ENCODE measurements at regions of chrX and their contacts with region 1.

Region 1: GRCh38 chrX:154056770-154057241 is 37.1 kb upstream of the IRAK1 start:
- DNase-seq: no peak
- ATAC-seq: peak; percentile 31 to 61 (median 54)
- H3K4me3 ChIP-seq: no peak overlapping the region
- H3K27ac ChIP-seq: peak overlapping the region; percentile 2
- H3K4me1 ChIP-seq: peaks cover 23% of the 10 kb centered on the region
- H3K27me3 ChIP-seq: peaks cover 0 to 16% (median 0%) of the 10 kb centered on the region in 3 donors
- CTCF ChIP-seq: no peak

Region 2: DNA sequence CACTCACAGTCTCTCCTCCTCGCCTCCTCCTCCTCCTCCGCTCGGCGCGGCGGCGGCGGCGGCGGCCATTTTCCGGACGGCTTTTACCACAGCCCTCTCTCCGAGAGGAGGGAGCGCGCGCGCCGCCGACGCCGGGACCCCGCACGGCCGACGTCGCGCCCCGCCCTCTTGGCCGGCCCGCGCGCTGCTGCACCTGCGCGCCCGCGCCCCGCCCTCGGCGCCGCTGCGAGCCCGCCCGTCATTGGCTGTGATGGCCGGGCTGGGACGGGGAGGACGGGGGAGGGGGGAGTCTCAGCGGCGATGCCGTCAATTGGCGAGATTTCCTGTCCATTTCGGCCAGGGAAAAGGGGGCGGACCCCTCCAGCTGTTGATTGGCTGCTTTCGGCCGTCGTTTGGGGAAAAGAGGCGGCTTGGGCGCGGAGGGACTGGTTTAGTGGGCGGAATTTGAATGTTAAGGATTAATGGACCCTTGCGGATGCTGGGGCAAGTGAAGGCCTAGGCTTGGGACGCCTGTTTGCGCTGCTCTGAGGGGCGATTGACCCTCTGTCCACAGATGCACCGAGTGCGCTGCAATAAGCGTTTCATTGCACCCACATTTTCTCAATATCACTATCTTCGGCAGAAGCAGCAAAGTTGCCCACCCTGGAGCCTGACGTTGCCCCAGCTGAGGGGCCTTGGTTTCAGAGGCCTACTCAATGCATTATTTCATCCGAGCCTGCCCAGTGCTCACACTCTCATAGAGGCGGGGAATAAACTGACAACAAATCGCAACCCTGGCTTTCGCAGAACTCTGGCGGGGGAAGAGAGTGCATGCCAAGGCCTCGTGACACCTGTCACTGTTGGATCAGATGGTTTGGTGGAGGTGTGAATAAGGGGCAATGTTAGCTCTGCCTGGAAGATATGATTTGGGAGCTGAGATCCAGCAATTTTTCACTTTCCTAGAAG is 41.1 kb after region 1 on chrX and contains the start of gene MECP2:
- intact Hi-C with region 1: loop called in 1 of 2 experiments (anchors 5 kb)
- DNase-seq: peak; percentile 91 to 95
- ATAC-seq: peak; percentile 88 to 94 (median 92)
- H3K4me3 ChIP-seq: peak within 1 kb of the TSS; percentile 74
- H3K27ac ChIP-seq: peak within 1 kb of the TSS; percentile 91
- H3K4me1 ChIP-seq: peaks cover 14% of the 10 kb centered on the region
- H3K27me3 ChIP-seq: peaks cover 0 to 14% (median 0%) of the 10 kb centered on the region in 3 donors
- CTCF ChIP-seq: no peak
- total RNA-seq, gene MECP2: 27.6 to 46.9 (median 33.9) TPM

Measured in psoas muscle (tissue), 8 donors.